ENCODE measurements at regions of chr5 and their contacts with region 1.

Region 1: DNA sequence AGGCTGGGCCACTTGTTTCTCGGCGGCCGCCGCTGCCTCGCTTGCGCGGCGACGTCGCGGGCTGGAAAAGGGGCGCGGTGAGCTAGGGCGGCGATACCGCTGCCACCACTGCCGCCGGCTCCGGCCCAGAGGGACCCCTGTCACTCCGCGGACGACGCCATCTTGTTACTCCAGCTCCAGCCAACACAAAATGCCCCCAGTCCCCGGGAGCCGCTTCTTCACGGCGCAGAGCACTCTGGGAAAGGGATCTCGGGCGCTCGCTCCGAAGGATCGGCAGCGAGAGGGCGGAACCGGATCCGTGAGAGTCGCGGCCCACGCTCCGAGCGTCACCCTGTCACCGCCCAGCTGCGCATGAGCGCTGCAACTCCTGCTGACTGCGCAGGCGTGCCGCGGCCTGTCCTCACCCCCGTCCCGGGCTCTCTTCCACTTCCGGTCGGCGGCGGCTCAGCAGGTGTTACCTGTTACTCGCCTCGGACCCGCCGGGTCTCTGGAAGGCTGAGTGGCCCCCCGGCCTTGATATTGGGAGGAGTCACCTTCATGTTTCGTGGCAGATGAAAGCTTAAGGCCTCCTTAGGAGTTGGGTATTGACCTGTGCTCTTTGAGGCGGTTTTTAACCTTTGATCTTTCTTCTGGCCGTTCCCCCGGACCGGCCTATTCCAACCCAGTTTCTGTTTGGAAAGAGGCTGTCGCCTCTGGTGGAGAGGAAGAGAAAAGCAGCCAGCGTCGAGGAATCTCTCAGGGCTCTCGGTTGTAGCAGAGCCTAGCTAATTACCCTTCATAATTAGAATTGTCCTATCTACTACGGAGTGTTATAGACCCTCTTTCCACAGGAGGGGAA is at the start of gene CSNK1A1:
- DNase-seq: peak; percentile 99
- ATAC-seq: peak; percentile 98
- total RNA-seq, gene CSNK1A1: 202 TPM

Region 2: GRCh38 chr5:149063017-149063687 is 488.3 kb before region 1 on chr5 and contains the start of gene SH3TC2:
- intact Hi-C with region 1: loop called (anchors 5 kb)
- DNase-seq: peak; percentile 86
- ATAC-seq: peak; percentile 89
- total RNA-seq, gene SH3TC2: 14.6 TPM

Region 3: GRCh38 chr5:149442563-149443182 is 108.7 kb before region 1 on chr5:
- intact Hi-C with region 1: loop called (anchors 1 kb)
- DNase-seq: peak; percentile 90
- ATAC-seq: peak; percentile 83

Region 4: DNA sequence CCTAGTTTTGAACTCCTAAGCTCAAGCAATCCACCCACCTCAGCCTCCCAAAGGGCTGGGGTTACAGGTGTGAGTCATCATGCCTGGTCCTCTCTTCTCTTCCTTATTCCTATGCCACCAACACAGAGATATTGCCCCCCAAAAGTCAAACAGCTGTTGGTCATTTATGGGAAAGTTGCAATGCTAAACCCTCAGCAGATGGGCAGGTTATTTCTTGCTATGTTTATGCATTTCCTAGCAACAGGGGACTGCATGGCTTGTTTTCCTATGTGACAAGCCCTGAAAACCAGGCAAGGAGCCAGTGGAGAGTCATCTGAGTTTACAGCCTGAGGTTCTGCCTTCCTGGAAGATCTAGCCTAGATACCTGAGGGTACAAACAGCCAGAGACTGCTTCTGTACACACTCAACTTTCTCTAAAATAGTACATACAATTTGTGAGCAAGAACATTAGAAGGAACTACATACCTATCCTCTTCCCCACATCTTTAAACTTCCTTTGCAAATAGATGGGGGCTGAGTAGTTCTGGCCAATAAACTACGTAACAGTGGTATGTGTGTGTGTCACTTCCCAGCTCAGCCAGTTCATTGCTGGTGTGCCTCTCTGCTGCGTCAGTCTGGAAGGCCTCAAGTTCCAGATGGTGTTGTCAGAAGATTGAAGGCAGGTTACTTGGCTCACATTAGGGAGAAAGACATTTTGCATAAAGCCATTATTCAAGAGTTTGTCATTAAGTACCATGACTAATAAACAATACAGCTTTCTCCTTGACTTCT is 65.6 kb before region 1 on chr5:
- intact Hi-C with region 1: loop called (anchors 2 kb)
- DNase-seq: no peak
- ATAC-seq: peak; percentile 87

Region 5: DNA sequence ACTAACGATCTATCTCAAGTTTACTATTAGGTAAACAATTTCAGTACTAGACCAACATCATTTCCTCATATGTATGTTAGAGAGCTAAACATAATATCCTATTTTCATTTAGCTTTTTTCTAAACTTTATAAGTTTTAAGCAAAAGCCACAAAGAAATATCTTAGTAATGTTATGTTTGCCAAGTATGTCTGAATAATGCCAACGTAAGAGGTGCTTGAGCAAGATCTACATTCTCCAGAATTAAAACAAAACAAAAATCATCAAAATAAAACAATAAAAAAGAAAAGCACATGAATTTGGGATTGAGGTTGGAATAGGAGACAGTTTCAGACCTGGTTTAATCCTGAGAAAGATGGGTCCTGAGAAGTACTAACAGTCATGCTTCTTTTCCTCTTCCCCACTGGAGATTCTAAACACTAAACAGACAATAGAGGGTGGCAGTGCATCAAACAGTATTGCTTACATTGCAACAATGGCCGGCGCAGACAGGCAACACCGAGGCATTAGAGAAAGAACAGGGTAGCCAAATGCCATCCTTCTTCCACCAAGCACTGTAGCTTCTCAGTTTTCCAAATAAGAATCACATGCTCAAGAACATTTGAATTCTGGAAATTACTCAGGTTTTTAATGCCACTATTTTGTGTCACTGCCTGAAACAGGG is 33.8 kb before region 1 on chr5:
- intact Hi-C with region 1: loop called (anchors 5 kb)
- DNase-seq: peak; percentile 32
- ATAC-seq: peak; percentile 49

Region 6: GRCh38 chr5:151520294-151520693 is 1968.9 kb after region 1 on chr5:
- intact Hi-C with region 1: no loop called
- DNase-seq: no peak
- ATAC-seq: peak; percentile 75

Measured in Right ventricle myocardium inferior (tissue), 1 donor.